Naive thymus-derived CD4-positive, alpha-beta T cell (primary cell): ENCODE measurements at regions of chr6 and their contacts with region 1.

Region 1: GRCh38 chr6:56851541-56852259 is 103.2 kb upstream of the BEND6 start:
- DNase-seq: peak in 5 of 9 donors; percentile 8 to 29 (median 24)
- ATAC-seq: peak; percentile 87
- H3K4me3 ChIP-seq: peak overlapping the region; percentile 13
- H3K4me3 Mint-ChIP-seq: peak overlapping the region; percentile 63 to 83 (median 81)
- H3K27ac ChIP-seq: no peak overlapping the region
- H3K27ac Mint-ChIP-seq: peak overlapping the region in 3 of 9 donors; percentile 15 to 67 (median 16)
- H3K4me1 ChIP-seq: no peaks in the 10 kb centered on the region
- H3K4me1 Mint-ChIP-seq: peaks cover 13 to 26% (median 25%) of the 10 kb centered on the region in 7 donors
- H3K27me3 ChIP-seq: peaks cover 0 to 3% of the 10 kb centered on the region in 2 donors
- H3K27me3 Mint-ChIP-seq: peaks cover 26 to 64% (median 52%) of the 10 kb centered on the region in 5 donors

Region 2: GRCh38 chr6:56637640-56638039 is 214.1 kb before region 1 on chr6:
- CTCF ChIA-PET with region 1: interaction called, 3 read pairs
- POLR2A ChIA-PET with region 1: no interaction called
- intact Hi-C with region 1: loop called (anchors 1 kb)
- DNase-seq: peak in 1 of 9 donors; percentile 7
- ATAC-seq: no peak
- H3K4me3 ChIP-seq: no peak overlapping the region
- H3K4me3 Mint-ChIP-seq: no peak overlapping the region
- H3K27ac ChIP-seq: no peak overlapping the region
- H3K27ac Mint-ChIP-seq: no peak overlapping the region
- H3K4me1 ChIP-seq: no peaks in the 10 kb centered on the region
- H3K4me1 Mint-ChIP-seq: no peaks in the 10 kb centered on the region
- H3K27me3 ChIP-seq: no peaks in the 10 kb centered on the region
- H3K27me3 Mint-ChIP-seq: peaks cover 2 to 13% (median 10%) of the 10 kb centered on the region in 5 donors

Region 3: DNA sequence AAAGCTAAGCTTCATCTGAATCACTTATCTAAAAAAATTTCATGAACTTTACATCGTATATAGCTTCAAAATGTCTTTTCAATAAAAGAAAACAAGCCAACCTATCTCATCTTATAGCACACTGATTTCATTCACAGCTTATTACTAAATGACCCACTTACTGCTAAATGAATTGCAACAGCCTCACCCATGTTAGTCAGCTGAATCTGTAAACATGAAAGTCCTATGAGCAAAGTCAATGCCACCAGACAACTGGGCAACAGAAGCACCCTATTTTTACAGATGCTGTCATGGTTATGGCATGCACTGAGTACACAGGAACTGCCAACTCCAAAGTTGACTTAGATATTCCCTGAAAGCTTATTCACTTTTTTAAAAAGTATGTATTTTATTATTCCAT is 167.8 kb before region 1 on chr6:
- CTCF ChIA-PET with region 1: no interaction called
- POLR2A ChIA-PET with region 1: no interaction called
- intact Hi-C with region 1: no loop called
- DNase-seq: no peak
- ATAC-seq: no peak
- H3K4me3 ChIP-seq: no peak overlapping the region
- H3K4me3 Mint-ChIP-seq: no peak overlapping the region
- H3K27ac ChIP-seq: no peak overlapping the region
- H3K27ac Mint-ChIP-seq: no peak overlapping the region
- H3K4me1 ChIP-seq: no peaks in the 10 kb centered on the region
- H3K4me1 Mint-ChIP-seq: no peaks in the 10 kb centered on the region
- H3K27me3 ChIP-seq: no peaks in the 10 kb centered on the region
- H3K27me3 Mint-ChIP-seq: peaks cover 0 to 8% (median 0%) of the 10 kb centered on the region in 5 donors

Region 4: GRCh38 chr6:56708810-56709597 is 142.7 kb before region 1 on chr6:
- CTCF ChIA-PET with region 1: interaction called, 6 read pairs
- POLR2A ChIA-PET with region 1: no interaction called
- intact Hi-C with region 1: loop called (anchors 1 kb)
- DNase-seq: peak in 3 of 9 donors; percentile 5 to 30 (median 10)
- ATAC-seq: peak; percentile 36
- H3K4me3 ChIP-seq: no peak overlapping the region
- H3K4me3 Mint-ChIP-seq: no peak overlapping the region
- H3K27ac ChIP-seq: no peak overlapping the region
- H3K27ac Mint-ChIP-seq: no peak overlapping the region
- H3K4me1 ChIP-seq: no peaks in the 10 kb centered on the region
- H3K4me1 Mint-ChIP-seq: no peaks in the 10 kb centered on the region
- H3K27me3 ChIP-seq: no peaks in the 10 kb centered on the region
- H3K27me3 Mint-ChIP-seq: peaks cover 0 to 6% (median 4%) of the 10 kb centered on the region in 5 donors

Region 5: DNA sequence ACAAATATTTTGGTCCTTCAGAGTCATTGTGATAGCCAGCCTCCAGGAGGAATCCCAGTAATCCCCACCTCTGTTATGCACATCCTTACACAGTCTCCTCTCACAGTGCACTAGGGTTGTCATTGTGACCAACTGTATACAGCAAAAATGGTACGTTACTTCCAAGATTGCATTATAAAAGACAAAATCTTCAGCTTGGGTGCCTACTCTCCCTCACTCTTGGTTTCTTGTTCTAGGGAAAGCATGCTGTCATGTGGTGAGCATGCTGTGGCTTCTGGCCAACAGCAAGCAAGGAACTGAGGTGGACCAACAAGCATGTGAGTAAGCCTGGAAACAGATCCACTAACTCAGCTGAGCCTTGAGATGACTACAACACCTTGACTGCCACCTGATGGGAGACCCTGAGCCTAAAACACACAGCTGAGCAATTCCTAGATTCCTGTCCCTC is 78.9 kb before region 1 on chr6:
- CTCF ChIA-PET with region 1: interaction called, 10 read pairs
- POLR2A ChIA-PET with region 1: no interaction called
- intact Hi-C with region 1: no loop called
- DNase-seq: no peak
- ATAC-seq: no peak
- H3K4me3 ChIP-seq: no peak overlapping the region
- H3K4me3 Mint-ChIP-seq: no peak overlapping the region
- H3K27ac ChIP-seq: no peak overlapping the region
- H3K27ac Mint-ChIP-seq: no peak overlapping the region
- H3K4me1 ChIP-seq: no peaks in the 10 kb centered on the region
- H3K4me1 Mint-ChIP-seq: no peaks in the 10 kb centered on the region
- H3K27me3 ChIP-seq: no peaks in the 10 kb centered on the region
- H3K27me3 Mint-ChIP-seq: peaks cover 0 to 6% (median 3%) of the 10 kb centered on the region in 5 donors

Region 6: DNA sequence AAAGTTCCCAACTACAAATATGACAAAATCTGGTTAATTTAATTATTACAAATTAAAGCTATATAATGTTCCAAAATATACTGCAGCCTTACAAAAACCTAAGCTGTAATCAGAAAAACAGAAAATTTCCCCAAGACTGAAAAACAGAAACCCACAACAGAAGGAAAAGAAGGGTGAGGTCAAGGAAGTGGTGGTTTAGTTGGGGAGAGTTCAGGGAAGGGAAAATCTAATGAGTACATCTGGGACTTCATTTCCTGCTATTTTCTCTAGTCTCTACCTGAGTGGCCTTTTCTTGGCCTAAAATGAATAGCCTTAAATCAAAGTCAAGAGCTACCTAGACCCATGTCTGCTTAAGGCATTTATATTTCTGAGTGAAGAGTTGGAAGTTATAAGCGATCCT is 37.0 kb after region 1 on chr6:
- CTCF ChIA-PET with region 1: no interaction called
- POLR2A ChIA-PET with region 1: no interaction called
- intact Hi-C with region 1: loop called in 1 of 2 experiments (anchors 5 kb)
- DNase-seq: no peak
- ATAC-seq: no peak
- H3K4me3 ChIP-seq: no peak overlapping the region
- H3K4me3 Mint-ChIP-seq: peak overlapping the region in 9 of 10 donors; percentile 0 to 73 (median 42)
- H3K27ac ChIP-seq: no peak overlapping the region
- H3K27ac Mint-ChIP-seq: peak overlapping the region in 6 of 9 donors; percentile 6 to 58 (median 47)
- H3K4me1 ChIP-seq: peaks cover 0 to 18% of the 10 kb centered on the region in 2 donors
- H3K4me1 Mint-ChIP-seq: peaks cover 10 to 31% (median 24%) of the 10 kb centered on the region in 7 donors
- H3K27me3 ChIP-seq: no peaks in the 10 kb centered on the region
- H3K27me3 Mint-ChIP-seq: peaks cover 0 to 12% (median 0%) of the 10 kb centered on the region in 5 donors